B cell (primary cell): ENCODE measurements at regions of chr7 and their contacts with region 1.

Region 1: DNA sequence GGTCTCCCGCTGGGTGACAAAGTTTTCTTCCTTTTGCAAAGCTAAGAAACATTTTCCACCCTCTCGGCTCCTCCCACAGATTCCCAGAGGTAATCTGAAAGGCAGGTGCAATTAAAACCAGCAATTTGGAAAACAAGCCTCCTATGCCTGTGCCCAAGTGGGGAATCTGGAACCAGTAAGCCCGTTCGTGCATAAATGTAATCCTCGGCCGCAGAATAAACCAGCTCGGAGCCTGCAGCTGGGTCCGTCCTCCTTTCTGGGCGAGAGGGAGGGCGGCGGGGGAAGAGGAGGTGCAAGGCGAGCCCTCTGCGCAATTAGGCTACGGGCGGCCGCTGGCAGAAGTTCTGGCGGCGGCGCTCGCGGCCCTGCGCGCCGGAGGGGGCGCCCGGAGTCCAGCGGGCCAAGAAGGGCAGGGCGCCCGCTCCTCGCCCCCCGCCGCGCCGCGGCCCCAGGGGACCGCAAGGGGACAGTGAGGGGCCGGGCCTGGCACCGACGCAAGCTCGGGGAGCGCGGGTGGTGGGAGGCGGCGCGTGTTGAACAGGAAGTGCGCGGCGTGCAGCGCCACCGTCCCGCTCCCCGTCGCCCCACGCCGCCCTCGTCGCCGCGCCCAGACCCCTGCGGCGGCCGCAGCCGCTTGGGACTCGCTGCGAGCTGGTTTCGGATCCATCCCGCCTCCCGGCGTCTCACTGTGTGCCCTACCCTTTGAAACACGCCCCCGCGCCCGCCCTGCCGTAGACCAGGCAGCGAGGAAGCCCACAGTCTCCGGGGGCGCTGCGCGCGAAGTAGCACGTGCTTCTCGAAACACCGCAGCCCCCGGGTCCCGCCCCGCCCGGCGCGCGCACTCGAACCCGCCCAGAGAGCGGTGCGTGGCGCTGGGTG is at the start of gene PRKAG2:
- DNase-seq: peak; percentile 86
- ATAC-seq: peak; percentile 57
- H3K4me3 ChIP-seq: peak within 1 kb of the TSS; percentile 65 to 100 (median 91)
- H3K4me3 Mint-ChIP-seq: peak within 1 kb of the TSS; percentile 98
- H3K27ac ChIP-seq: peak within 1 kb of the TSS; percentile 57 to 70
- H3K27ac Mint-ChIP-seq: peak within 1 kb of the TSS; percentile 95
- H3K4me1 ChIP-seq: peaks cover 10 to 16% of the 10 kb centered on the region in 2 donors
- H3K4me1 Mint-ChIP-seq: peaks cover 16% of the 10 kb centered on the region
- H3K27me3 ChIP-seq: no peaks in the 10 kb centered on the region
- H3K27me3 Mint-ChIP-seq: no peaks in the 10 kb centered on the region
- CTCF ChIP-seq: peak; percentile 23
- total RNA-seq, gene PRKAG2: 51.8 and 56.3 TPM in 2 replicates

Region 2: GRCh38 chr7:151519765-151520418 is 357.2 kb before region 1 on chr7 and contains the start of gene RHEB:
- CTCF ChIA-PET with region 1: no interaction called
- POLR2A ChIA-PET with region 1: interaction called, 3 read pairs
- intact Hi-C with region 1: loop called (anchors 2 kb)
- DNase-seq: peak; percentile 99
- ATAC-seq: peak; percentile 81
- H3K4me3 ChIP-seq: peak within 1 kb of the TSS; percentile 63 to 79 (median 74)
- H3K4me3 Mint-ChIP-seq: peak within 1 kb of the TSS; percentile 82
- H3K27ac ChIP-seq: peak within 1 kb of the TSS; percentile 78 to 93
- H3K27ac Mint-ChIP-seq: peak within 1 kb of the TSS; percentile 95
- H3K4me1 ChIP-seq: peaks cover 18 to 27% of the 10 kb centered on the region in 2 donors
- H3K4me1 Mint-ChIP-seq: peaks cover 37% of the 10 kb centered on the region
- H3K27me3 ChIP-seq: peaks cover 0 to 4% (median 2%) of the 10 kb centered on the region in 4 experiments
- H3K27me3 Mint-ChIP-seq: peaks cover 3% of the 10 kb centered on the region
- CTCF ChIP-seq: no peak
- total RNA-seq, gene RHEB: 32.0 and 40.3 TPM in 2 replicates

Region 3: DNA sequence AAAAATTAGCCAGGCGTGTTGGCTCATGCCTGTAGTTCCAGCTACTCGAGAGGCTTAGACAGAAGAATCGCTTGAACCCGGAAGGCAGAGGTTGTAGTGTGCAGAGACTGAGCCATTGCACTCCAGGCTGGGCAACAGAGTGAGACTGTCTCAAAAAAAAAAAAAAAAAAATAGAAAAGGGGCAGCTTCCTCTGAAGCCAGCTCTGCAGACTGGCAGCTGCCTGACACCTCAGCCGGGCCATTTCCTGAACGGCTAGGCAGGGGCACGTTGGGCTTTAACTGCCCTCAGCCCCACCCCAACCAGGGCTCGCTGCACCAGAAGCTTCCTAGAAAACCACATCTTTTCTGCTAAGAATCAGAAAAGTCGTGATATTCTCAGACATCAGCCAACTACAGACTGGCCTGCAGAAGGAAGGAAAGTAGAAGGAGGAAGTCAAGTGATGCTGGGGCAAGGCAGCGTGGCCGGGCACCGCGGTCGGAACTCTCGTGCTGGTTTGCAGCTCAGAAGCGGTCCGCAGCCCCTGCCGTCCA is 38.2 kb before region 1 on chr7:
- CTCF ChIA-PET with region 1: interaction called, 5 read pairs
- POLR2A ChIA-PET with region 1: interaction called, 22 read pairs
- intact Hi-C with region 1: loop called (anchors 1 kb)
- DNase-seq: peak; percentile 86
- ATAC-seq: peak; percentile 90
- H3K4me3 ChIP-seq: peak overlapping the region in 4 of 5 experiments; percentile 1 to 51 (median 30)
- H3K4me3 Mint-ChIP-seq: peak overlapping the region; percentile 89
- H3K27ac ChIP-seq: peak overlapping the region; percentile 59 to 78
- H3K27ac Mint-ChIP-seq: peak overlapping the region; percentile 92
- H3K4me1 ChIP-seq: peaks cover 32 to 47% of the 10 kb centered on the region in 2 donors
- H3K4me1 Mint-ChIP-seq: peaks cover 34% of the 10 kb centered on the region
- H3K27me3 ChIP-seq: no peaks in the 10 kb centered on the region
- H3K27me3 Mint-ChIP-seq: no peaks in the 10 kb centered on the region
- CTCF ChIP-seq: no peak

Region 4: GRCh38 chr7:151851145-151851751 is 25.9 kb before region 1 on chr7:
- CTCF ChIA-PET with region 1: interaction called, 13 read pairs
- POLR2A ChIA-PET with region 1: interaction called, 4 read pairs
- intact Hi-C with region 1: loop called (anchors 1 kb)
- DNase-seq: peak; percentile 79
- ATAC-seq: peak; percentile 71
- H3K4me3 ChIP-seq: peak overlapping the region; percentile 26 to 62 (median 53)
- H3K4me3 Mint-ChIP-seq: peak overlapping the region; percentile 89
- H3K27ac ChIP-seq: peak overlapping the region; percentile 44 to 54
- H3K27ac Mint-ChIP-seq: peak overlapping the region; percentile 82
- H3K4me1 ChIP-seq: peaks cover 21 to 31% of the 10 kb centered on the region in 2 donors
- H3K4me1 Mint-ChIP-seq: peaks cover 32% of the 10 kb centered on the region
- H3K27me3 ChIP-seq: no peaks in the 10 kb centered on the region
- H3K27me3 Mint-ChIP-seq: no peaks in the 10 kb centered on the region
- CTCF ChIP-seq: no peak

Region 5: GRCh38 chr7:151897161-151897731 is 20.1 kb after region 1 on chr7:
- CTCF ChIA-PET with region 1: no interaction called
- POLR2A ChIA-PET with region 1: no interaction called
- intact Hi-C with region 1: no loop called
- DNase-seq: no peak
- ATAC-seq: no peak
- H3K4me3 ChIP-seq: no peak overlapping the region
- H3K4me3 Mint-ChIP-seq: no peak overlapping the region
- H3K27ac ChIP-seq: no peak overlapping the region
- H3K27ac Mint-ChIP-seq: no peak overlapping the region
- H3K4me1 ChIP-seq: no peaks in the 10 kb centered on the region
- H3K4me1 Mint-ChIP-seq: no peaks in the 10 kb centered on the region
- H3K27me3 ChIP-seq: peaks cover 0 to 12% (median 0%) of the 10 kb centered on the region in 4 experiments
- H3K27me3 Mint-ChIP-seq: peaks cover 35% of the 10 kb centered on the region
- CTCF ChIP-seq: no peak

Region 6: DNA sequence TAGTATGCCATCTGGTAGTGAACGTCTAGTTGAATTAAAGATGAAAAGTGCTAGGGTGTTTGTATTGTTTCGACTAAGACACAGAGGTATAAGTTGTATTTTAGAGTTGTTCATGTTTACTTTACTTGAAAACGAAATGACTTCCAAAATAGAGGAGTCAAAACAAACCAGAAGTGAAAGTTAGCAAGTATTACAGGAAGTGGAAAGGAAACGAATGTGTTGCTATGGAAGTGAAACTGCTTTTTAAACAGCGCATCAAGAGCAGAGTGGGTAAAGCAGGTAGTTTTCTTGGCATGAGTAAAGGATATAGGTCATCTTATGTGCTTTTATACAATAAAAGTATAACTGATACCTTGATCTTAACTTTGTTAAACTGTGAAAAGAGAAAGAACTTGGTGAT is 59.1 kb after region 1 on chr7:
- CTCF ChIA-PET with region 1: interaction called, 7 read pairs
- POLR2A ChIA-PET with region 1: interaction called, 3 read pairs
- intact Hi-C with region 1: loop called (anchors 1 kb)
- DNase-seq: peak; percentile 82
- ATAC-seq: peak; percentile 81
- H3K4me3 ChIP-seq: peak overlapping the region in 3 of 5 experiments; percentile 6 to 48 (median 38)
- H3K4me3 Mint-ChIP-seq: peak overlapping the region; percentile 94
- H3K27ac ChIP-seq: peak overlapping the region; percentile 70 to 82
- H3K27ac Mint-ChIP-seq: peak overlapping the region; percentile 99
- H3K4me1 ChIP-seq: peaks cover 33 to 37% of the 10 kb centered on the region in 2 donors
- H3K4me1 Mint-ChIP-seq: peaks cover 39% of the 10 kb centered on the region
- H3K27me3 ChIP-seq: no peaks in the 10 kb centered on the region
- H3K27me3 Mint-ChIP-seq: peaks cover 4% of the 10 kb centered on the region
- CTCF ChIP-seq: no peak

Region 7: DNA sequence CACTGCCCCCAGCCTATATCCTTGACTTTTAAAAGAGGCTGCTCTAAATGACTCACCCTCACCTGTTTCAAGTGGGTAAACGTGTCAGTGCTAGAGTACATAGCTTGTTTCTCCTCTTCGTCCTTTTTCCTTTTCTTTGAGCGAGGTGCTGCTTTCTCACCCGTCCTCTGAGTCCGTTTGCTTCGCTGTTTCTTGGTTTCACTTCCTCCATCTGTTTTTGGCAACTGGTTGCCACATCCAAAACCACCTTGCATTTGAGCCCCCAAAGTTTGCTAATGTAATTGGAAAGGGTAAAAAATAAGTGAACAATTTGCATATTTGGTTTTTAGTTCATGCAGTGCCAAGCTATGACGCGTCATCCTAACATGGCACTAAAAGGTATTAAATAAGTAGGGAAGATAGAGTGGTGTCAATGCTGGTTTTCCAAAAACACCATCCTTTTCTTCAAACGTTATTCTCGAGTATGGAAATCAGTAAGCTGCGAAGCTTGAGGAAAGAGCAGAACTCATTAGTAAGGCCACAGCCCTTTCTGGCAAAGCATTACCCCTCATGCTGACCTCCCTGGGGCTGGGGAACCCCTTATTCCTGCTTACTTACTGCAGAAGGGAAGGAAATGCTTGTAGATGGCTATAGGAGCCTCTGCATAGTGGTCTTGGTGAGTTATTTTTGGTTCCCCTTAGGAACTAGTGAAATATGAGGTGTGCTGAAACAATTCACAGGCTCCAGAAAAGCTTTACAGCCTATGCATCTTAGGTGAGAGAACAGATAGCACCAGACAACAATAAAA is 281.9 kb after region 1 on chr7:
- CTCF ChIA-PET with region 1: no interaction called
- POLR2A ChIA-PET with region 1: interaction called, 4 read pairs
- intact Hi-C with region 1: loop called (anchors 2 kb)
- DNase-seq: peak; percentile 86
- ATAC-seq: peak; percentile 90
- H3K4me3 ChIP-seq: peak overlapping the region in 3 of 5 experiments; percentile 18 to 48 (median 36)
- H3K4me3 Mint-ChIP-seq: peak overlapping the region; percentile 67
- H3K27ac ChIP-seq: peak overlapping the region; percentile 86 to 87
- H3K27ac Mint-ChIP-seq: peak overlapping the region; percentile 89
- H3K4me1 ChIP-seq: peaks cover 29 to 31% of the 10 kb centered on the region in 2 donors
- H3K4me1 Mint-ChIP-seq: peaks cover 40% of the 10 kb centered on the region
- H3K27me3 ChIP-seq: no peaks in the 10 kb centered on the region
- H3K27me3 Mint-ChIP-seq: no peaks in the 10 kb centered on the region
- CTCF ChIP-seq: no peak

Region 8: GRCh38 chr7:152463709-152464311 is 586.7 kb after region 1 on chr7:
- CTCF ChIA-PET with region 1: no interaction called
- POLR2A ChIA-PET with region 1: no interaction called
- intact Hi-C with region 1: loop called (anchors 10 kb)
- DNase-seq: peak; percentile 100
- ATAC-seq: peak; percentile 91
- H3K4me3 ChIP-seq: peak overlapping the region in 4 of 5 experiments; percentile 69 to 99 (median 86)
- H3K4me3 Mint-ChIP-seq: peak overlapping the region; percentile 96
- H3K27ac ChIP-seq: peak overlapping the region; percentile 87 to 96
- H3K27ac Mint-ChIP-seq: peak overlapping the region; percentile 70
- H3K4me1 ChIP-seq: peaks cover 20 to 24% of the 10 kb centered on the region in 2 donors
- H3K4me1 Mint-ChIP-seq: peaks cover 24% of the 10 kb centered on the region
- H3K27me3 ChIP-seq: no peaks in the 10 kb centered on the region
- H3K27me3 Mint-ChIP-seq: no peaks in the 10 kb centered on the region
- CTCF ChIP-seq: no peak